ENCODE measurements at regions of chr5 and their contacts with region 1.

Region 1: GRCh38 chr5:160747987-160748386 is 104.0 kb downstream of the ATP10B start:
- DNase-seq: no peak
- ATAC-seq: peak; percentile 22; the same call in 1 of the 2 replicates
- H3K4me3 Mint-ChIP-seq: no peak overlapping the region
- H3K27ac Mint-ChIP-seq: peak overlapping the region; percentile 6; the same call in 1 of the 2 replicates
- H3K4me1 Mint-ChIP-seq: peaks cover 19% of the 10 kb centered on the region
- H3K27me3 Mint-ChIP-seq: no peaks in the 10 kb centered on the region
- CTCF ChIP-seq: no peak

Region 2: DNA sequence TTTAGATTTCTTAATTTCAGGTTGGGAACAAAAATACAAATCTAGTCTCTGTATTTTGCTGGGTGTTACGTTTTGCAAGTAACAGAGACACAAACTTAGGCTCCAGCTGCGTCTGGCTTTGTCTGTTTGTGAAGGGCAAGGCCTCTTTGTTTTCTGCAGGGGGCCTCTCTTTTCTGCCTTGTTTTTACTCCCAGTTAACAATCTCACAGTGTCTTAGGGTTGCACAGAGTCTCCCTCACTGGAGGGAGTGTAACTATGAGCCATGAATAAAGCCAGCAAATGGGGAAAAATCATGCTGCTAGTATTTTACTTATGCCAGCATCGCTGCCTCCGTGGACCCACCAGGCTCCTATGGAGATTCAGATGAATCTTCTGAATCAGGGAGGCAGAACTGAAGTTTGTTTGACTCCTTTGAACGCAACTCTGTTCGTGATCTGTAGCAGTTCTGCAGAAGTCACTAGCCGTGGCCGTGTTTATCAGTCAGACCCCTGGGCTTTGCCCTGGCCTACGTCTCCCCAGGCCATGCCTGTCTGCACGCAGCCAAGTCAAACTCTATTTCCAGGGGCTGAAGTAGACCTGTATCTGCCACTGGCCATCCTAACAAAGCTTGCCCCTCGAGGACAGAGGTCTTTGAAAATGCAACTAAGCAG is 26.8 kb after region 1 on chr5:
- CTCF ChIA-PET with region 1: no interaction called
- POLR2A ChIA-PET with region 1: no interaction called
- DNase-seq: no peak
- ATAC-seq: peak; percentile 55
- H3K4me3 Mint-ChIP-seq: no peak overlapping the region
- H3K27ac Mint-ChIP-seq: 0 out of 2 replicates have a peak overlapping the region, but pooled peaks have one; percentile 41
- H3K4me1 Mint-ChIP-seq: peaks cover 32% of the 10 kb centered on the region
- H3K27me3 Mint-ChIP-seq: no peaks in the 10 kb centered on the region
- CTCF ChIP-seq: no peak

Region 3: DNA sequence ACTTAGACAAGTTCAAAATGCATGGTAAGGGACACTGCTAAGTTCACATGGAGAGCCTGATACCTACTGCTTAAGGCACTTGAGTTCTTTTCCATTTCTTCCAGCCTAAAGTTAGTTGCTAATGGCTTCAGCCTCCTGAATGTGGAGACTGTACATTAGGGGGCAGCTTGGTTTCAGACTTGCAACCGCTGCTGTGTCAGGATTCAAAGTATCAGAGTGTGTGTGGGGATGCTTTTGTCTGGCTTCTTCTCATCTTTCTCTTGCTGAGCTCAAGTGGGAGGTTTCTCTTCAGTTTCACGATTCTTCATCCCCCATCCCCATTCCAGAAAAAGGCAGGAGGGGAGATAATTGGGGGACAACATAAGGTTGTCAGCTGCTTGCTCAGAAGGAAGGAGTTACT is 54.6 kb after region 1 on chr5:
- CTCF ChIA-PET with region 1: no interaction called
- POLR2A ChIA-PET with region 1: interaction called, 11 read pairs
- DNase-seq: no peak
- ATAC-seq: peak; percentile 50; the same call in 1 of the 2 replicates
- H3K4me3 Mint-ChIP-seq: no peak overlapping the region
- H3K27ac Mint-ChIP-seq: no peak overlapping the region
- H3K4me1 Mint-ChIP-seq: 0 out of 2 replicates have a peak, but pooled peaks cover 2% of the 10 kb centered on the region
- H3K27me3 Mint-ChIP-seq: no peaks in the 10 kb centered on the region
- CTCF ChIP-seq: no peak

Region 4: GRCh38 chr5:160926428-160926827 is 178.4 kb after region 1 on chr5:
- CTCF ChIA-PET with region 1: no interaction called
- POLR2A ChIA-PET with region 1: no interaction called
- DNase-seq: no peak
- ATAC-seq: no peak
- H3K4me3 Mint-ChIP-seq: no peak overlapping the region
- H3K27ac Mint-ChIP-seq: no peak overlapping the region
- H3K4me1 Mint-ChIP-seq: peaks cover 61% of the 10 kb centered on the region
- H3K27me3 Mint-ChIP-seq: no peaks in the 10 kb centered on the region
- CTCF ChIP-seq: no peak